ENCODE measurements at regions of chr20 and their contacts with region 1.

Region 1: DNA sequence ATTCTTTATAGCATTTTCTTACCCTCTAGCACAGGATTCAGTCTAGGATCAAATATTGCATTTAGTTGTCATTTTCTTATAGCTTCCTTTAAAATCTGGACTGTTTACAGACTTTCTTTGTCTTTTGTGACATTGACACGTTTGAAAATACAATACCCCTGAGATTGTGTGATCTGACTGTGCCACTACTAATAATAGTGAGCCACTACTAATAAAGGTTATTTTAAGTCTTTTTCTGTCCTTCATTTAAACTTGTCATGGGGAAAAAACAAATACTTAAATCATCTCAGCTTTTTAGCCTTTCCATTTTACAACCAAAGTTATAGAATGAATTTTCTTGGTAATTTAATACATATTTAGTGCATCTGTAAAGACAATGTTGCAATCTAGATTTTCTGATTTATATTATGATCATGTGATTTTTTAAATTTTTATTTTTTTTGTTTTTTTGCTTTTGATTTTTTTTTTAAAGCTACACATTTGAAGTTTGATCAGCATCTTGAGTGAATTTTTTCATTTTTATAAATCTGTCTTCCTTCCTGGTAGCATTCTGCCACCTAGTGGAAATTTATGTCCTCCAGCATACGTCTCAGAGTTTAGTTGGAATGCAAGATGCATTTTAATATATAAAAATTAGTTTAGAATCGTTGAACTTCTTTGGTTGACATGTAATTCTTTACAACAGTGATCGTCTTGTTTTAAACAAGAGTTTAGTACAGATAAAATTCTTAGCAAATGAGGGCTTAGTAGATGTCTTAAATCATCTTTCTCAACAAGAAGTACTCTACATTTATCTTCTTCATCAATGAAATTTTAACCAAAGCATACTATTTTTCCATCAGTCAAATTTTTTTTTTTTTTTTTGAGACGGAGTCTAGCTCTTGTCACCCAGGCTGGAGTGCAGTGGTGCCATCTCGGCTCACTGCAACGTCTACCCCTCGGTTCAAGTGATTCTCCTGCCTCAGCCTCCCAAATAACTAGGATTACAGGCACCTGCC is 119.4 kb downstream of the NCOA3 start:
- DNase-seq: peak in 1 of 7 donors; percentile 21
- H3K4me3 ChIP-seq: no peak overlapping the region
- H3K27ac ChIP-seq: no peak overlapping the region
- H3K4me1 ChIP-seq: no peaks in the 10 kb centered on the region
- H3K27me3 ChIP-seq: no peaks in the 10 kb centered on the region
- CTCF ChIP-seq: peak; percentile 71 to 94 (median 82)
- POLR2A ChIP-seq: no peak

Region 2: GRCh38 chr20:47196091-47197081 is 424.7 kb before region 1 on chr20:
- intact Hi-C with region 1: loop called (anchors 10 kb)
- DNase-seq: peak; percentile 64 to 87 (median 72)
- H3K4me3 ChIP-seq: no peak overlapping the region
- H3K27ac ChIP-seq: no peak overlapping the region
- H3K4me1 ChIP-seq: no peaks in the 10 kb centered on the region
- H3K27me3 ChIP-seq: no peaks in the 10 kb centered on the region
- CTCF ChIP-seq: peak; percentile 92 to 98 (median 96)
- POLR2A ChIP-seq: no peak

Region 3: GRCh38 chr20:47205577-47206498 is 415.3 kb before region 1 on chr20:
- intact Hi-C with region 1: loop called in 1 of 2 experiments (anchors 10 kb)
- DNase-seq: peak in 6 of 7 donors; percentile 71 to 87 (median 76)
- H3K4me3 ChIP-seq: no peak overlapping the region
- H3K27ac ChIP-seq: no peak overlapping the region
- H3K4me1 ChIP-seq: no peaks in the 10 kb centered on the region
- H3K27me3 ChIP-seq: no peaks in the 10 kb centered on the region
- CTCF ChIP-seq: peak; percentile 11 to 97 (median 57)
- POLR2A ChIP-seq: no peak

Region 4: GRCh38 chr20:47400685-47401084 is 220.4 kb before region 1 on chr20:
- intact Hi-C with region 1: loop called in 1 of 2 experiments (anchors 10 kb)
- DNase-seq: no peak
- H3K4me3 ChIP-seq: no peak overlapping the region
- H3K27ac ChIP-seq: no peak overlapping the region
- H3K4me1 ChIP-seq: peaks cover 8 to 11% of the 10 kb centered on the region in 2 donors
- H3K27me3 ChIP-seq: no peaks in the 10 kb centered on the region
- CTCF ChIP-seq: no peak
- POLR2A ChIP-seq: no peak

Region 5: GRCh38 chr20:47677635-47678453 is 56.7 kb after region 1 on chr20:
- intact Hi-C with region 1: no loop called
- DNase-seq: peak in 5 of 7 donors; percentile 40 to 68 (median 49)
- H3K4me3 ChIP-seq: no peak overlapping the region
- H3K27ac ChIP-seq: no peak overlapping the region
- H3K4me1 ChIP-seq: no peaks in the 10 kb centered on the region
- H3K27me3 ChIP-seq: no peaks in the 10 kb centered on the region
- CTCF ChIP-seq: peak; percentile 55 to 77 (median 68)
- POLR2A ChIP-seq: no peak

Measured in adrenal gland (tissue), 19 donors.